ENCODE measurements at regions of chr6 and their contacts with region 1.

Region 1: GRCh38 chr6:11172501-11173332 is 59.8 kb downstream of the NEDD9 start:
- DNase-seq: no peak
- ATAC-seq: peak; percentile 89
- H3K4me3 ChIP-seq: no peak overlapping the region
- H3K27ac ChIP-seq: no peak overlapping the region
- H3K4me1 ChIP-seq: no peaks in the 10 kb centered on the region
- H3K27me3 ChIP-seq: no peaks in the 10 kb centered on the region
- CTCF ChIP-seq: peak; percentile 81 to 88 (median 81)
- EP300 ChIP-seq: no peak
- POLR2A ChIP-seq: no peak
- RAD21 ChIP-seq: peak; percentile 83

Region 2: DNA sequence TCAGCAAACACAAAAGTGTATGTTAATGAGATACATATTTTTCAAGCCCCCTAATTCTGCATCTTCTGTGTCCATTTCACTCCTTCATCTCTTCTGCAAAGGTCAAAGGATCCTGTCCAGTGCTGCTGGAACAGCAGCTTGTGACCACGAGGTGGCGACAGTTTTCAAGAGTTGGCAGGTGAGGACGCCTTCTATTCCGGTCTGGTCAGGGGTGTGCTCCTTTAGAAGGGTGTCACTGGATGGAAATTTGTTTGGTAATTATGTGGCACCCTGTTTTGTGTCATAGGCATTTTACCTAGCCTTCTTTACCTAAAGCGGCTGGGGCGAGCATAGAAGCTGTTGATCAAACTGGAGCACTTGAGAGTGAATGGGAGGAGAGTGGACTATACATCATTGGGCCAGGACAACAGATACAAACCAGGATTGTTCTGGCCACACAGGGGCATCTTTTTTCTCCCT is 28.3 kb before region 1 on chr6:
- CTCF ChIA-PET with region 1: interaction called, 6 read pairs
- POLR2A ChIA-PET with region 1: interaction called, 3 read pairs
- RAD21 ChIA-PET with region 1: interaction called, 4 read pairs
- SMC1A ChIA-PET with region 1: interaction called, 11 read pairs
- in situ Hi-C with region 1: no loop called
- intact Hi-C with region 1: no loop called
- DNase-seq: peak; percentile 49
- ATAC-seq: peak; percentile 99
- H3K4me3 ChIP-seq: no peak overlapping the region
- H3K27ac ChIP-seq: no peak overlapping the region
- H3K4me1 ChIP-seq: peaks cover 3% of the 10 kb centered on the region; the same call in 1 of the 2 replicates
- H3K27me3 ChIP-seq: no peaks in the 10 kb centered on the region
- CTCF ChIP-seq: peak; percentile 93 to 97 (median 95)
- EP300 ChIP-seq: no peak
- POLR2A ChIP-seq: no peak
- RAD21 ChIP-seq: peak; percentile 100

Region 3: GRCh38 chr6:11155589-11155988 is 17.1 kb before region 1 on chr6:
- CTCF ChIA-PET with region 1: interaction called, 11 read pairs
- POLR2A ChIA-PET with region 1: no interaction called
- RAD21 ChIA-PET with region 1: interaction called, 4 read pairs
- SMC1A ChIA-PET with region 1: interaction called, 5 read pairs
- in situ Hi-C with region 1: no loop called
- intact Hi-C with region 1: no loop called
- DNase-seq: no peak
- ATAC-seq: no peak
- H3K4me3 ChIP-seq: no peak overlapping the region
- H3K27ac ChIP-seq: no peak overlapping the region
- H3K4me1 ChIP-seq: no peaks in the 10 kb centered on the region
- H3K27me3 ChIP-seq: no peaks in the 10 kb centered on the region
- CTCF ChIP-seq: no peak
- EP300 ChIP-seq: no peak
- POLR2A ChIP-seq: no peak
- RAD21 ChIP-seq: no peak

Region 4: DNA sequence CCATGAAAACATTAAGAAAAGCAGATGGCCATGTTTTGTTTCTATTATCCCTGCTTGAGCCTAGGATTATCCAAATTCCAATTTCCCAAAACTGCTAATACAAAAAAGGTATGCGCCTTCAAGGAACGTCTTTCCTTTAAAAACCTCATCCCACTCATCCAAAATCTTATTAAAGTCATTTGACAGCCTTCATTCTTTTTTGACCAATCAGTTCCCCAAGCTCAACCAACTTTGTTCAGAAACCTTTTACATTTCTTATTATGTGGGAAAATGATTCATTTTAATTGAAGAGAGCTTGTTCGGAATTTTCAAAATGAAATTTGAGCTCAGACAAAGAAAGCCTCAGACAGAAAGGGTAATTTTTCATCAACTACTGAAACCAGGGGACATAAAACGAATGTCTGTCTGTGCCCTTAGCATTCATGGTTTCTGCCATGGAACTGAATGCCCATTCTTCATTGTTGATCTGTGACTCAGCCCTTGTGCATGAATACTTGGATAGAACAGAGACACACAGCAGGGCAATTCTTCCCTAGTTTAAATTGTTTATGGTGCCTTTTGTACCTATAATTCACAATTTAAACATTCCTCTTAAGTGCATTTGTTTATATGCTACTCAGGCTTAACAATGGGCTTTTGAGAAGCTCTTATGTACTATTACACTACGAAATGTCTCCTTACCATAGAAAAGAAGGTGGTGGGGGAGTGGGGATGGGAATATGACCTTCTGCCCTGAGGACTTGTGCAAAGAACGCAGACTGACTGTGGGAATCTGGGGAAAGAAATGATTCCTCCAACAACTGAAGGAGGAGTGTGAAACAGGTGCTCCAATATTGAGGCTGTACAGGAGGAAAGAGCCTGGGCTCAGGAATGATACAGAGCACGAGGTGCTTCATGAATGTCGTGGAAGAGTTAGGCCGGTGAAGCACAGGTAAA is 11.4 kb before region 1 on chr6:
- CTCF ChIA-PET with region 1: interaction called, 11 read pairs
- POLR2A ChIA-PET with region 1: interaction called, 4 read pairs
- RAD21 ChIA-PET with region 1: interaction called, 4 read pairs
- SMC1A ChIA-PET with region 1: interaction called, 6 read pairs
- in situ Hi-C with region 1: no loop called
- intact Hi-C with region 1: no loop called
- DNase-seq: no peak
- ATAC-seq: no peak
- H3K4me3 ChIP-seq: no peak overlapping the region
- H3K27ac ChIP-seq: no peak overlapping the region
- H3K4me1 ChIP-seq: peaks cover 6% of the 10 kb centered on the region; the same call in 1 of the 2 replicates
- H3K27me3 ChIP-seq: no peaks in the 10 kb centered on the region
- CTCF ChIP-seq: no peak
- EP300 ChIP-seq: no peak
- POLR2A ChIP-seq: no peak
- RAD21 ChIP-seq: no peak

Region 5: GRCh38 chr6:11188161-11188915 is 15.6 kb after region 1 on chr6:
- CTCF ChIA-PET with region 1: interaction called, 13 read pairs
- POLR2A ChIA-PET with region 1: interaction called, 8 read pairs
- RAD21 ChIA-PET with region 1: no interaction called
- SMC1A ChIA-PET with region 1: interaction called, 3 read pairs
- in situ Hi-C with region 1: no loop called
- intact Hi-C with region 1: no loop called
- DNase-seq: no peak
- ATAC-seq: no peak
- H3K4me3 ChIP-seq: no peak overlapping the region
- H3K27ac ChIP-seq: no peak overlapping the region
- H3K4me1 ChIP-seq: no peaks in the 10 kb centered on the region
- H3K27me3 ChIP-seq: no peaks in the 10 kb centered on the region
- CTCF ChIP-seq: no peak
- EP300 ChIP-seq: no peak
- POLR2A ChIP-seq: no peak
- RAD21 ChIP-seq: no peak

Region 6: GRCh38 chr6:11263291-11263775 is 90.6 kb after region 1 on chr6:
- CTCF ChIA-PET with region 1: interaction called, 11 read pairs
- POLR2A ChIA-PET with region 1: interaction called, 6 read pairs
- RAD21 ChIA-PET with region 1: no interaction called
- SMC1A ChIA-PET with region 1: no interaction called
- in situ Hi-C with region 1: no loop called
- intact Hi-C with region 1: no loop called
- DNase-seq: no peak
- ATAC-seq: no peak
- H3K4me3 ChIP-seq: no peak overlapping the region
- H3K27ac ChIP-seq: no peak overlapping the region
- H3K4me1 ChIP-seq: peaks cover 10% of the 10 kb centered on the region
- H3K27me3 ChIP-seq: no peaks in the 10 kb centered on the region
- CTCF ChIP-seq: no peak
- EP300 ChIP-seq: no peak
- POLR2A ChIP-seq: no peak
- RAD21 ChIP-seq: no peak